A549 (cell line): ENCODE measurements at regions of chr19 and their contacts with region 1.

Region 1: GRCh38 chr19:13277104-13277809 is 127.0 kb downstream of the IER2 start:
- DNase-seq: peak; percentile 47 to 75
- ATAC-seq: peak; percentile 89 to 98
- H3K4me3 ChIP-seq: no peak overlapping the region
- H3K27ac ChIP-seq: peak overlapping the region in 1 of 2 experiments; percentile 47; a peak in 1 of 6 replicates
- H3K4me1 ChIP-seq: no peaks in the 10 kb centered on the region
- CTCF ChIP-seq: peak; percentile 65
- EP300 ChIP-seq: no peak
- POLR2A ChIP-seq: no peak
- RAD21 ChIP-seq: peak; percentile 78 to 80

Region 2: DNA sequence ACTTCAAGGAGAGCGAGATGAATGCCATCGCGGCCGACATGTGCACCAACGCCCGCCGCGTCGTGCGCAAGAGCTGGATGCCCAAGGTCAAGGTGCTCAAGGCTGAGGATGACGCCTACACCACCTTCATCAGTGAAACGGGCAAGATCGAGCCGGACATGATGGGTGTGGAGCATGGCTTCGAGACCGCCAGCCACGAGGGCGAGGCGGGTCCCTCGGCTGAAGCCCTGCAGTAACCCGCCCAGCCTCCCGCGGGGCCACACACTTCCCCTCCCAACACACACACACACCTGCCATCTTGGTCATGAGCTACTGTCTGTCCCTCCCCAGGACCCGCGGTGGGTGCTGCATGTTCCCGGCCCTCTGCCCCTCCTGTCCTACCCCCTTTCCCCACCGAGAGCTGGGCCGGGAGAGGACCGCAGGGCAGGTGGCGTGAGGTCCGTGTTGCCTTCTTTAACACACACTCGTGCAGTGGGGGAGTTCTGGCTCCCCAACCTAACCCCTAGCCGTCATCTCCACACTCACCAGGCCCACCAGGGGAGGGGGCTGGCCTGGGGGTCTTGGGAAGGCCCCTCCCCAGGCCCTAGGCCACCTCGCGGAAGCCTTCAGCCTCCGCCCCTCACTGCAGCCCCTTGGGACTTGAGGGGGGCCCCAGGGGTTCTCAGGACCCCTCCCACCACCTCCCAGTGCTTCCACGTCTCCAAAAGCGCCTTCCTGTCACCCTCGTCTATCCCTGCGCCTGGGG is 138.9 kb before region 1 on chr19:
- CTCF ChIA-PET with region 1: no interaction called
- POLR2A ChIA-PET with region 1: no interaction called
- DNase-seq: no peak
- ATAC-seq: no peak
- H3K4me3 ChIP-seq: no peak overlapping the region
- H3K27ac ChIP-seq: no peak overlapping the region
- H3K4me1 ChIP-seq: peaks cover 22% of the 10 kb centered on the region
- CTCF ChIP-seq: no peak
- EP300 ChIP-seq: no peak
- POLR2A ChIP-seq: no peak
- RAD21 ChIP-seq: no peak

Region 3: DNA sequence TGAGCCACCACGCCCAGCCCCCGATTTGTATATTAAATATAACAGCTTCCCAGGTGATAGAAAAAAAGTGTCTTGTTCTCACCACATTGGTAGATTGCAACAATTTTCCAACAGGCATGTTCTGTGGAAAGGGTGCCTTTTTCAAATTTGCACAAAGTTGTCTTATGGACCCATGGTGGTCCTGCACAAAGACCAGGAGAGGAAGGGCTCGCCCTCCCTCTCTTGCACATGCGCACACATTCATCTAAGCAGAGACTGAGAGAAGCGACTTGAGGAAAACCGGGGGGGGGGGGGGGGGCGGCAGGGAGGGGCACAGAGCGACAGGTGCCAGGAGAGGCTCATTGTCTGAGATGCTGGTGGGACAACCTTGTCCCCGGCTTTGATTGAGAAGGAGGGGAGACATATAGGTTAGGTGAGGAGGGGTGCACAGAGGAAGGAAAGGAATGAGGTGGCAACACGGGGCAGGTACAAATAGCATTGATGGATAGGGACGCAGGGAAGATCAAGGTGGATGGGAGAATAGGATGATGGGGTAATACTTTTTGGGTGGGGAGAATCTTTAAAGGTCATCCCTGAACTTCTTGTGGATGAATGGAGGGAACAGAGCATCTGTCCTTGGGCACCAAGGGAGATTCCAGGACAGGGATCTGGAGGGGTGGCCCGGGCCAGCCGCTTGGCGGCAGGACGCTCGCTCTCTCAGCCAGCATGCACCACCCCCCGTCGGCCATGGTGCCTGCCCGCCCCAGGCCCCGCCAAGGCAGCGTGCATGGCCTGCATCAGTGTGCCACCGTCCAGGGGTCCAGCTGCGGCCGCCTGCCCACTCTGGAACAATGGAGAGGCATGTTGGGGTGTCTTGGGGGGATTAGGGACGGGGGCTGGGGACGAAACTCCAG is 51.0 kb before region 1 on chr19:
- CTCF ChIA-PET with region 1: no interaction called
- POLR2A ChIA-PET with region 1: no interaction called
- DNase-seq: no peak
- ATAC-seq: no peak
- H3K4me3 ChIP-seq: no peak overlapping the region
- H3K27ac ChIP-seq: no peak overlapping the region
- H3K4me1 ChIP-seq: no peaks in the 10 kb centered on the region; the same call in 2 of the 3 replicates
- CTCF ChIP-seq: no peak
- EP300 ChIP-seq: no peak
- POLR2A ChIP-seq: no peak
- RAD21 ChIP-seq: no peak

Region 4: DNA sequence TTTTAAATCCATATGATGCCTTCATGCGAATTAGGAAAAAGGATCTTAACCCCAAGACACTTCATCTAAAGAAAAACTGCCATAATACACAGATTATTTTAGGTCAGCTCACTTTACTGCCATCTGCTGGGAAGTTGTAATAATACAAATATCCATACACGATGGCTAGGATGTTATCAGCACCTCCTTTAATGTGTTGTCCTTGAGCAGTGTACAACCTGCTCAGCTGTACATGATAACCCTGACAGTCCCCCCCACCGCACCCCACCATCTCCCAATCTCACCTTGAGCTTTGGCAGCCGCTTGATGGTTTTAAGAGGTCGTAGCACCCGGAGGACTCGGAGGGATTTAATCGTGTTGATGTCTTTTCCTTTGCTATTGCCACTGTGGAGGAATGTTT is 14.8 kb before region 1 on chr19:
- CTCF ChIA-PET with region 1: interaction called, 19 read pairs
- POLR2A ChIA-PET with region 1: no interaction called
- DNase-seq: peak; percentile 43 to 45
- ATAC-seq: peak; percentile 44 to 75; a peak in 4 of 6 replicates
- H3K4me3 ChIP-seq: no peak overlapping the region
- H3K27ac ChIP-seq: peak overlapping the region in 1 of 2 experiments; percentile 5; a peak in 2 of 6 replicates
- H3K4me1 ChIP-seq: peaks cover 13% of the 10 kb centered on the region; the same call in 2 of the 3 replicates
- CTCF ChIP-seq: peak; percentile 61
- EP300 ChIP-seq: no peak
- POLR2A ChIP-seq: no peak
- RAD21 ChIP-seq: peak; percentile 59 to 69

Region 5: DNA sequence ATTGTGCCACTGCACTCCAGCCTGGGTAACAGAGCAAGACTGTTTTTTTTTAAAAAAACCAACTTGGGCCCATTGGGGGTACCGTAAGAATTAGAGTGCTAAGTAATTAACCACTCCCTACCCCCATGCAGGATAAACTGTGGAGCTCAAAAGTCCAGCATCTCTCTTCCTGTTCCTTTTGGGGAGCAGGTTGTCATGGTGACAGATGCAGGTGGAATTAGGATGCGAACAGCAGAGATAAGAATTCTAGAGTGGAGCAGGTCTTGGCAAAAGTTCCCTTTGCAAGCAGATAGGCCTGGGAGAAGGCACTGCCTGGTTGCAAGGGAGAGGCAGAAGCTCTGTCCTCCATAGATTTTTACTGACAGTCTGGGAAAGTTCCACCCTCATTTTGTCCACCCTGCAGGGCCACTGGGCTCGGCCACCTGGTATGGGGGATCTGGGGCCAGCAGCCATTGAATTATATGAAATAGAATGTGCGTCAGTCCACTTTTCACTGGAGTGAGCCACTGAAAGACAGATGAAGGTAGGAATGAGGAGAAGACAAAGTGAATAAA is 14.6 kb after region 1 on chr19:
- CTCF ChIA-PET with region 1: interaction called, 25 read pairs
- POLR2A ChIA-PET with region 1: no interaction called
- DNase-seq: no peak
- ATAC-seq: no peak
- H3K4me3 ChIP-seq: no peak overlapping the region
- H3K27ac ChIP-seq: no peak overlapping the region
- H3K4me1 ChIP-seq: no peaks in the 10 kb centered on the region
- CTCF ChIP-seq: no peak
- EP300 ChIP-seq: no peak
- POLR2A ChIP-seq: no peak
- RAD21 ChIP-seq: no peak

Region 6: DNA sequence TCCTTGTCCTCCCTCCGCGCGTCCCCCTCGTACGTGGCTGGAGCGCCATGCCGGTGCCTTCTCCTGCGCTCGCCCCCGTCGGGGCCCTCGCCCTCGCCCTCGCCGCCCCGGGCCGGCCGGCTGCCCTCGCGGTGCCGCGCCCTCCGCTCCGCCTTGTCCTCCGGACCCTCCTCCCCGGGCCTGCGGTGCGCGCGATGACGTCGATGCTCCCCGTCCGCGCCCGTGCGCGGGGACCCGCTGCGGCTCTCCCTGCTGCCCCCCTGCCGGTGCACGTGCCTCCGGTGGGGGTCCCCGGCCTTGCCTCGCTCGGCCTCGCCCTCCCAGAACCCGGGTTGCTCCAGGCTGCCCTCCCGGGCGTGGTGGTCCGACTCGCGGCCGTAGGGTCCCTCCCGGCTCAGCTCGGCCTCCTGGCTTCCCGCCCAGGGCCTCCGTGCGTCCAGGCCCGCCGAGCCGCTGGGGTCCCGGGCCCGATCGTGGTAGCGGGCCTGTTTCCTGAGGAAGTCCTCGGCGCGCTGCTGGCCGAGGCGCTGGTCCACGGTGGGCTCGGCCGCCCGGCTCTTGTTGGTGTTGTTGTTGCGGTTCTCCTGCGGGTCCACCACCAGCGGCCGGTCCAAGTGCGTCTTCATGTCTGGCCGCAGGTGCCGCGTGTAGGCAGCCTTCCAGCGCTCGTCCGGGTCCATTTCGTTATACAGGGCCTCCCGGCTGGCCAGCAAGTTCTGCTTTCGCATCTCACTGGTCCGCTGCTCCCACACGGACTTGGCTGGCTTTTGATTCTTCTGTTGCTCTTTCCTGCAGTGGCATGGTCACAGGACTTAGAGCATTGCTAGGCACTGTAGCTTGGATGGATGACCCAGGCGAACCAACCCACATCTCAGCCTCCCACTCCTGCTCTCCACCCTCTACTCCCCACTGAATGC is 21.6 kb after region 1 on chr19:
- CTCF ChIA-PET with region 1: interaction called, 12 read pairs
- POLR2A ChIA-PET with region 1: no interaction called
- DNase-seq: no peak
- ATAC-seq: no peak
- H3K4me3 ChIP-seq: no peak overlapping the region
- H3K27ac ChIP-seq: no peak overlapping the region
- H3K4me1 ChIP-seq: no peaks in the 10 kb centered on the region
- CTCF ChIP-seq: no peak
- EP300 ChIP-seq: no peak
- POLR2A ChIP-seq: no peak
- RAD21 ChIP-seq: no peak

Region 7: GRCh38 chr19:13417054-13417453 is 139.8 kb after region 1 on chr19:
- CTCF ChIA-PET with region 1: no interaction called
- POLR2A ChIA-PET with region 1: no interaction called
- DNase-seq: no peak
- ATAC-seq: no peak
- H3K4me3 ChIP-seq: no peak overlapping the region
- H3K27ac ChIP-seq: no peak overlapping the region
- H3K4me1 ChIP-seq: no peaks in the 10 kb centered on the region
- CTCF ChIP-seq: no peak
- EP300 ChIP-seq: no peak
- POLR2A ChIP-seq: no peak
- RAD21 ChIP-seq: no peak

Region 8: DNA sequence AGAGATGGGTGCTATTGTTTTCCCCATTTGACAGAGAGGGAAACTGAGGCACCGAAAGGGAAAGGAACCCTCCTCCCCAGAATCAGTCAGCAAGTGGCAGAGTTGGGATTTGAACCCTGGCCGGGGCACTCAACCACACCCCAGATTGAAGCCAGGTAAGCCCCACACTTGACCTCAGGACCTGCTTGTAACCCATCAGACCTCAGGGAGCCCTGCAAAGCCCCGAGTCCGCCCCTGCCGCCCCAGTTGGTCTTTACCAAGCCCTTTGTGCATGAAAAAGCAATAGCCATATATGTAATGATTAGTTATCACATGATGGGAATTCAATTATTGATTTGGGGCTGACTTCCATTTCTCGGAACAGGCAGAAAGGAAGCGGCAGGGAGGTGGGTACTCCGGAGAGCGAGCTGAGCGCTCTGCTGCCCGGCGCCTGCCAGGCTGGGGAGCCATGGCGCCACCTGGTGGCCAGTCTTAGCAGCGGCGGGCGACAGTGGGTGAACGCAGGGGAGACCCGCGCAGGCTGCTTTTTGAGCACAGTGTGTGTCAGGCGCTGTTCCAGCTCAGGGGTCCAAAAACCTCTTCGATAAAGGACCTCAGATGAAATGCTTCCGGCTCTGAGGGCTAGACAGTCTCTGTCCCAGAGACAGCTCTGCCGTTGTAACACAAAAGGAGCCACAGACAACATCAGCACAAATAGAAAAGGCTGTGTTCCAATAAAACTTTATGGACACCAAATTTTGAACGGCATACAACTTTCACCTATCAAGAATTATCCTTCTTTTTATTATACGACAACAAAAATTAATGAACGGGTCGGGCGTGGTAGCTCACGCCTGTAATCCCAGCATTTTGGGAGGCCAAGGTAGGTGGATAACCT is 311.9 kb after region 1 on chr19:
- CTCF ChIA-PET with region 1: interaction called, 50 read pairs
- POLR2A ChIA-PET with region 1: interaction called, 4 read pairs
- DNase-seq: peak; percentile 40 to 65
- ATAC-seq: peak; percentile 98 to 99
- H3K4me3 ChIP-seq: no peak overlapping the region
- H3K27ac ChIP-seq: no peak overlapping the region
- H3K4me1 ChIP-seq: no peaks in the 10 kb centered on the region
- CTCF ChIP-seq: peak; percentile 85
- EP300 ChIP-seq: no peak
- POLR2A ChIP-seq: no peak
- RAD21 ChIP-seq: peak; percentile 60 to 73; a peak in 4 of 5 replicates

Region 9: DNA sequence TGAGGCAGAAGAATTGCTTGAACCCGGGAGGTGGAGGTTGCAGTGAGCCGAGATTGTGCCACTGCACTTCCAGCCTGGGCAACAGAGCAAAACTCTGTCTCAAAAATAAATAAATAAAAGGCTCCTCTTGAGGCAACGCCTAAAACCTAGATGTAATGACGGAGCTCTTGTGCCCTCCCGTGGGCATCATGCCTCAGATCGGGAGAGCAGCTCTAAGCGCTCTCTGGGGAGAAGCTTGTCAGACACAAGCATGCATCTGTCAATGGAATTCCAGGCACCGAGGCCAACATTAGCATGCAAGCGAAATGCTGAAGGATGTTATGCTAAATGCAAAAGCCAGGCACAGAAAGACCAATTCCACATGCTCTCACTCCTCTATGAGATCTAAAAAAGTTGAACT is 441.5 kb after region 1 on chr19:
- CTCF ChIA-PET with region 1: interaction called, 11 read pairs
- POLR2A ChIA-PET with region 1: no interaction called
- DNase-seq: peak; percentile 21 to 65
- ATAC-seq: peak; percentile 74 to 85; a peak in 5 of 6 replicates
- H3K4me3 ChIP-seq: no peak overlapping the region
- H3K27ac ChIP-seq: no peak overlapping the region
- H3K4me1 ChIP-seq: no peaks in the 10 kb centered on the region
- CTCF ChIP-seq: peak; percentile 39
- EP300 ChIP-seq: no peak
- POLR2A ChIP-seq: no peak
- RAD21 ChIP-seq: peak; percentile 70